ENCODE measurements at regions of chr17 and their contacts with region 1.

Region 1: GRCh38 chr17:40474419-40475002 is 26.9 kb downstream of the TNS4 start:
- DNase-seq: no peak
- H3K4me3 ChIP-seq: no peak overlapping the region
- H3K27ac ChIP-seq: no peak overlapping the region
- H3K4me1 ChIP-seq: no peaks in the 10 kb centered on the region
- H3K27me3 ChIP-seq: peaks cover 0 to 4% of the 10 kb centered on the region in 2 experiments
- CTCF ChIP-seq: no peak
- POLR2A ChIP-seq: no peak

Region 2: DNA sequence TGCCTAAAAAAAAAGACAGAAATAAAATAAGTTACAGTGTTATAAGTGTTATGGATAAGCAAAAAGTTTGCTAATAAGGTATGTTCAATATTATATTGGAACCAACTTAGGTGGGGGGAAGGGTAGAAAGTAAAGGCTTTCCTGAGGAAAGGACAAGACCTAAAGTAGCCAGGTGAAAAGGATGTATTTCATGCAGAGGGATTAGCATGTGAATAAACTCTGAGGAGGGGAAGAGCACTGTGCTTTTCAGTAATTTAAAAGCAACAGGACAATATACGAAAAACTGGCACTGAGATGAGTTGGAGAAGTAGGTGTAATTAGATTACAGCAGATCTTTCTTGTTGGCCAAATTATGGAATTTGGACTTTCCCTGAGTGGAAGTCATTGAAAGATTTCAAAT is 64.4 kb before region 1 on chr17:
- CTCF ChIA-PET with region 1: interaction called, 49 read pairs
- POLR2A ChIA-PET with region 1: no interaction called
- dilution Hi-C with region 1: no loop called
- intact Hi-C with region 1: no loop called
- DNase-seq: no peak
- H3K4me3 ChIP-seq: no peak overlapping the region
- H3K27ac ChIP-seq: no peak overlapping the region
- H3K4me1 ChIP-seq: no peaks in the 10 kb centered on the region
- H3K27me3 ChIP-seq: no peaks in the 10 kb centered on the region
- CTCF ChIP-seq: no peak
- POLR2A ChIP-seq: no peak

Region 3: GRCh38 chr17:40433551-40434415 is 40.7 kb before region 1 on chr17:
- CTCF ChIA-PET with region 1: interaction called, 143 read pairs
- POLR2A ChIA-PET with region 1: no interaction called
- dilution Hi-C with region 1: no loop called
- intact Hi-C with region 1: no loop called
- DNase-seq: no peak
- H3K4me3 ChIP-seq: no peak overlapping the region
- H3K27ac ChIP-seq: no peak overlapping the region
- H3K4me1 ChIP-seq: no peaks in the 10 kb centered on the region
- H3K27me3 ChIP-seq: peaks cover 0 to 2% of the 10 kb centered on the region in 2 experiments
- CTCF ChIP-seq: peak; percentile 38 to 55
- POLR2A ChIP-seq: no peak

Region 4: GRCh38 chr17:40490289-40490853 is 15.9 kb after region 1 on chr17:
- CTCF ChIA-PET with region 1: interaction called, 28 read pairs
- POLR2A ChIA-PET with region 1: no interaction called
- dilution Hi-C with region 1: no loop called
- intact Hi-C with region 1: no loop called
- DNase-seq: no peak
- H3K4me3 ChIP-seq: no peak overlapping the region
- H3K27ac ChIP-seq: no peak overlapping the region
- H3K4me1 ChIP-seq: no peaks in the 10 kb centered on the region
- H3K27me3 ChIP-seq: peaks cover 2 to 6% of the 10 kb centered on the region in 2 experiments
- CTCF ChIP-seq: no peak
- POLR2A ChIP-seq: no peak

Region 5: GRCh38 chr17:40548982-40549685 is 74.6 kb after region 1 on chr17:
- CTCF ChIA-PET with region 1: interaction called, 11 read pairs
- POLR2A ChIA-PET with region 1: no interaction called
- dilution Hi-C with region 1: no loop called
- intact Hi-C with region 1: no loop called
- DNase-seq: peak; percentile 87
- H3K4me3 ChIP-seq: no peak overlapping the region
- H3K27ac ChIP-seq: no peak overlapping the region
- H3K4me1 ChIP-seq: peaks cover 16% of the 10 kb centered on the region
- H3K27me3 ChIP-seq: no peaks in the 10 kb centered on the region
- CTCF ChIP-seq: no peak
- POLR2A ChIP-seq: no peak